B cell (primary cell): ENCODE measurements at regions of chr10 and their contacts with region 1.

Region 1: GRCh38 chr10:70221030-70221429 is 12.2 kb downstream of the PPA1 start:
- DNase-seq: no peak
- ATAC-seq: no peak
- H3K4me3 ChIP-seq: no peak overlapping the region
- H3K4me3 Mint-ChIP-seq: no peak overlapping the region
- H3K27ac ChIP-seq: no peak overlapping the region
- H3K27ac Mint-ChIP-seq: no peak overlapping the region
- H3K4me1 ChIP-seq: peaks cover 5% of the 10 kb centered on the region in 2 donors
- H3K4me1 Mint-ChIP-seq: peaks cover 12% of the 10 kb centered on the region
- H3K27me3 ChIP-seq: no peaks in the 10 kb centered on the region
- H3K27me3 Mint-ChIP-seq: no peaks in the 10 kb centered on the region
- CTCF ChIP-seq: no peak

Region 2: GRCh38 chr10:70186571-70186970 is 34.5 kb before region 1 on chr10:
- CTCF ChIA-PET with region 1: no interaction called
- POLR2A ChIA-PET with region 1: no interaction called
- intact Hi-C with region 1: no loop called
- DNase-seq: no peak
- ATAC-seq: no peak
- H3K4me3 ChIP-seq: no peak overlapping the region
- H3K4me3 Mint-ChIP-seq: no peak overlapping the region
- H3K27ac ChIP-seq: no peak overlapping the region
- H3K27ac Mint-ChIP-seq: no peak overlapping the region
- H3K4me1 ChIP-seq: no peaks in the 10 kb centered on the region
- H3K4me1 Mint-ChIP-seq: no peaks in the 10 kb centered on the region
- H3K27me3 ChIP-seq: no peaks in the 10 kb centered on the region
- H3K27me3 Mint-ChIP-seq: peaks cover 6% of the 10 kb centered on the region
- CTCF ChIP-seq: no peak

Region 3: GRCh38 chr10:70267161-70267933 is 46.3 kb after region 1 on chr10:
- CTCF ChIA-PET with region 1: interaction called, 23 read pairs
- POLR2A ChIA-PET with region 1: no interaction called
- intact Hi-C with region 1: loop called (anchors 5 kb)
- DNase-seq: no peak
- ATAC-seq: no peak
- H3K4me3 ChIP-seq: no peak overlapping the region
- H3K4me3 Mint-ChIP-seq: no peak overlapping the region
- H3K27ac ChIP-seq: no peak overlapping the region
- H3K27ac Mint-ChIP-seq: no peak overlapping the region
- H3K4me1 ChIP-seq: peaks cover 0 to 1% of the 10 kb centered on the region in 2 donors
- H3K4me1 Mint-ChIP-seq: peaks cover 3% of the 10 kb centered on the region
- H3K27me3 ChIP-seq: peaks cover 0 to 2% (median 0%) of the 10 kb centered on the region in 4 experiments
- H3K27me3 Mint-ChIP-seq: peaks cover 22% of the 10 kb centered on the region
- CTCF ChIP-seq: peak; percentile 34

Region 4: DNA sequence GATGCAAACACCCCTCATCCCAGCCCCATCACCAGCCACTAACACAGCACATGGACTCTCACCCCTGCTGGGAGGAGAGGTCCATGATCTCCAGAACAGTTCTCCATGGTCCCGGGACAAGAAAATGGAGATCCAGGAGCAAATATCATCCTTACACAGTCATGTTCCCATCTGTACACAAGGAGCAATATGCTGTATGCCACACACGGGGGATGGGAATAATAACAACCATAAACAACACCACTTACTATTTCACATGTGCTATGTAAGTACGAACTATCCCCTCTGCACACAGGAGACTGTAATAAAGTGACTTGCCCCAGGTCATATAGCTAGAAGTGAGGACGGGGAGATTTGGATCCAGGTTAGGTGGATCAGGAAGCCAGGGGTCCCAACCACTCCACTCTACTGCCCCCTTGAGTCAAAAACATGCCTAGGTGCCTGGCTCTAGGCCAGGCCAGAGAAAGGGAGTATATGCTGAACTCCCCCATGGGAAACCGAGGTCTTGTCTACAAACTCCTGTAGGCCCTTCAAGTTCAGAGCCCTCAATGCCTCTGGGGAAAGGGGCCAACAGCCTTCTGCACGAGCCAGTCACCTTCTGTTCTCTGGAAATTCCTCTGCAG is 127.3 kb after region 1 on chr10:
- CTCF ChIA-PET with region 1: interaction called, 778 read pairs
- POLR2A ChIA-PET with region 1: no interaction called
- intact Hi-C with region 1: no loop called
- DNase-seq: peak; percentile 50
- ATAC-seq: peak; percentile 45
- H3K4me3 ChIP-seq: no peak overlapping the region
- H3K4me3 Mint-ChIP-seq: no peak overlapping the region
- H3K27ac ChIP-seq: no peak overlapping the region
- H3K27ac Mint-ChIP-seq: no peak overlapping the region
- H3K4me1 ChIP-seq: no peaks in the 10 kb centered on the region
- H3K4me1 Mint-ChIP-seq: no peaks in the 10 kb centered on the region
- H3K27me3 ChIP-seq: no peaks in the 10 kb centered on the region
- H3K27me3 Mint-ChIP-seq: no peaks in the 10 kb centered on the region
- CTCF ChIP-seq: no peak

Region 5: DNA sequence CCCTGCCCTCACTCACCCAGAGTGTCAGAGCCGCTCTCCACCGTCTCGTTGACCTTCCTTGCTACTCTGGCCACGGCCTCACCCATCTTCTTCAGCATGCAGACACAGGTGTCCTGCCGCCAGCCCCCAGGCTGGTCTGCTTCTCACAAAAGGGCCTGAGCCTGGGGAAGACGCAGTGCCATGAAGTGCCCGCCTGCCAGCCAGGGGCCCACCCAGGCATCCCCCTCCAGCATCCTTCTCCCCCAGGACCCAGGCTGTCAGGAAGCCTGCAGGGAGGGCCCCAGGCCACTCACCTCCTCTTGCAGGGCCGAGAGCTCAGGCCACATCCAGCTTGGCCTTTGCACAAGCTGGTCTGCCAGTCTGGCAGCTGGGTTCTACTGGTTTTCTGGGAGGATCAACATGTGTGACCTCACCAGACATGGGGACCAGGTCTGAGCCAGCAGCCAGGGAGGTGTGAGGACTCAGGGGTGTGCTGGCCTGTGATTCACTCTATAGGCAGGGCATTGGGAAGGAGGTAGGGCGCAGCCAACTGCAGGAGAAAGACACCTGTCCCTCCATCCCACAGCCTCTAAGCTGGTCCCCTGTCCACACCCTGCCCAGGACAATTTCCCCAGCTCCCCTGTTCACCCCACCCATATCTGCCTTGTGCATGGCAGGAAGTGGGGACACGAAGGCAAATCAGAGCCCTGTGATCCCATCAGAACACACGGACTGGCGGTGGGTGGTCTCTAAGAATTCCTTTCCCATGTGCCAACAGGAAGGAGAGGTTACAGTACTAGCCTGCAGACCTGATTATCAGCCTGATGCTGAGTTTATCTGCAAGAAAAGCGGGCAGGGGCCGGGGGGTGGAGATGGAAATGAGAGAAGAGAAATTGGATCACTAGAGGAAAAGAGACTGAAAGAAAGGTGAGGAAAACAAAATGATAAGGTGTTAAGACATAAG is 155.7 kb after region 1 on chr10:
- CTCF ChIA-PET with region 1: interaction called, 13 read pairs
- POLR2A ChIA-PET with region 1: interaction called, 6 read pairs
- intact Hi-C with region 1: no loop called
- DNase-seq: no peak
- ATAC-seq: no peak
- H3K4me3 ChIP-seq: no peak overlapping the region
- H3K4me3 Mint-ChIP-seq: no peak overlapping the region
- H3K27ac ChIP-seq: no peak overlapping the region
- H3K27ac Mint-ChIP-seq: no peak overlapping the region
- H3K4me1 ChIP-seq: peaks cover 4 to 5% of the 10 kb centered on the region in 2 donors
- H3K4me1 Mint-ChIP-seq: peaks cover 8% of the 10 kb centered on the region
- H3K27me3 ChIP-seq: peaks cover 0 to 15% (median under 1%) of the 10 kb centered on the region in 4 experiments
- H3K27me3 Mint-ChIP-seq: no peaks in the 10 kb centered on the region
- CTCF ChIP-seq: no peak